ENCODE measurements at regions of chr10 and their contacts with region 1.

Region 1: GRCh38 chr10:73252445-73253224 is at the start of gene MRPS16:
- DNase-seq: peak; percentile 92 to 97 (median 94)
- H3K4me3 ChIP-seq: peak within 1 kb of the TSS; percentile 49 to 99
- H3K4me3 Mint-ChIP-seq: peak within 1 kb of the TSS; percentile 95 to 100 (median 98)
- H3K27ac ChIP-seq: peak within 1 kb of the TSS; percentile 82
- H3K27ac Mint-ChIP-seq: peak within 1 kb of the TSS; percentile 94 to 99 (median 97)
- H3K4me1 ChIP-seq: peaks cover 33% of the 10 kb centered on the region
- H3K4me1 Mint-ChIP-seq: peaks cover 22 to 46% (median 34%) of the 10 kb centered on the region in 4 donors
- H3K27me3 ChIP-seq: no peaks in the 10 kb centered on the region
- H3K27me3 Mint-ChIP-seq: no peaks in the 10 kb centered on the region
- total RNA-seq, gene MRPS16: 44.9 to 47.1 TPM

Region 2: DNA sequence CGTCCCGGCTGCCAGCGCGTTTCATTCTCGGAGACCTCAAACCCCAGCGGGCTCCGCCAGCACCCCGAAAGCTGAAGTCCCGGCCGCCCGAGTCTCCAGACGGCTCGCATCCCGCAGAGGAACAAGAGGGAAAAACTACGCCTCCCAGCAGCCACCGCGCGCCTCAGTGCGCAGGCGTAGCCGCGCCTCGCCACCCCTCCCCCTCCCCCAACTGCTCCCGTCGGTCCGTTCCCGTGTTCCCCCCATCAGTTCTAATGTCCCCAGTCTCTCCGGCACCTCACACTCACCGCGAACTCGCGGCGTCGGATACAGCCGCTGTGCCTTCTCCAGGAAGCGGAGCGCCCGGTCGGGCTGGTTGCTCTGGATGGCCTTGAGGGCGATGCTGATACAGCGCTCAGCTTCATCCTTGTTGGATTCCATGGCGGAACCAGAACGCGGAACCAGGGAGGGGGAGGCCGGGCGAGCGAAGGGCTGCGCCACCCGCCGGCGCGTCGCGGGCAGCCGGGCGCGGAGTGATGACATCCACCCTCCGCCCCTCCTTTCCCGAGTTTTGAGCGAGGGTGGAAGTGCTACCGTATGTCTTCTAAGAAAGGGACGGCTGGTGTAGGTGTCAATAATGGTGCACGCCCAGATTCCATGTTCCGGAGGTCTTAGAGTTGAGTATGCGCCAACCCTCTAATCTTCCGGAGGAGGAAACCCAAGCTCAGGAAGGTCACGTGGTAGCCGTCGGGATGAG is 898.0 kb before region 1 on chr10 and contains the start of gene DNAJB12:
- CTCF ChIA-PET with region 1: no interaction called
- POLR2A ChIA-PET with region 1: no interaction called
- intact Hi-C with region 1: loop called (anchors 10 kb)
- DNase-seq: peak; percentile 92 to 97 (median 94)
- H3K4me3 ChIP-seq: peak within 1 kb of the TSS; percentile 92 to 99
- H3K4me3 Mint-ChIP-seq: peak within 1 kb of the TSS; percentile 94 to 99 (median 97)
- H3K27ac ChIP-seq: peak within 1 kb of the TSS; percentile 80
- H3K27ac Mint-ChIP-seq: peak within 1 kb of the TSS; percentile 90 to 99 (median 98)
- H3K4me1 ChIP-seq: peaks cover 34% of the 10 kb centered on the region
- H3K4me1 Mint-ChIP-seq: peaks cover 30 to 54% (median 42%) of the 10 kb centered on the region in 4 donors
- H3K27me3 ChIP-seq: no peaks in the 10 kb centered on the region
- H3K27me3 Mint-ChIP-seq: no peaks in the 10 kb centered on the region
- total RNA-seq, gene DNAJB12: 26.3 to 26.7 TPM

Region 3: DNA sequence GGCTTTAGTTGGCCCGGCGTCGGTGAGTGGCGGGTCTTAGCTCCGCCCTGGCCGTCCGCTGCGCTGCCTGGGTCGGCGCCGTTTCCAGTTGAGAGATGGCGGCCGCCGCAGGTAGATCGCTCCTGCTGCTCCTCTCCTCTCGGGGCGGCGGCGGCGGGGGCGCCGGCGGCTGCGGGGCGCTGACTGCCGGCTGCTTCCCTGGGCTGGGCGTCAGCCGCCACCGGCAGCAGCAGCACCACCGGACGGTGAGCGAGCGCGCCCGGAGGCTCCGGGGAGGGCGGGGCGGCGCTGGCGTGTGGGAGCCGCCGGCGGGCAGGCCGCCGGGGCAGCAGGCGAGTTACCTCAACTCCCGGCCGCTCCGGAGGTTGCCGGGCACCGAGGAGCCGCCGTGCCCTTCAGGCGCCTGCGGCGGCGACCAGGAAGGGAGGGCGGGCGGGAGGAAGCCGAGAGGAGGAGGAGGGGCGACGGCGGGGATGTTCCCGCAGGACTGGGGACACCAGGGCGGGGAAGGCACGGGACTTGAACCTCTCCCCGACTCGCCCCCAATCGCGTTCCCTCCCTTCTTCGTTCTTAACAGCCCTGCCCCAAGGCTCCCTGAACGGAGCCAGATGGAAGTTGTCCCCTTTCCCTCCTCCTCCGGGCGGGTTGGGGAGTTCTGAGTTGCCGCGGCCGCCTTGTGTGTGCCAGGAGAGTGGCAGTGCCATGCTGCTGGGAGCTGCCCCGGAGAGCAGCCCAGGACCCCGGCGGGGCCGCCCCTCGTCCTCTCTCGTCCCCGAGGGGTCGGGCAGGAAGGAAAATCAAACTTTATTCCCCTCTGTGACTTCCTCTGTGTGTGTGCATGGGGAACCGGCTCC is 560.4 kb before region 1 on chr10 and contains the start of gene MCU:
- CTCF ChIA-PET with region 1: no interaction called
- POLR2A ChIA-PET with region 1: no interaction called
- intact Hi-C with region 1: loop called (anchors 5 kb)
- DNase-seq: peak; percentile 91 to 95 (median 93)
- H3K4me3 ChIP-seq: peak within 1 kb of the TSS; percentile 49 to 69
- H3K4me3 Mint-ChIP-seq: peak within 1 kb of the TSS; percentile 86 to 93 (median 90)
- H3K27ac ChIP-seq: peak within 1 kb of the TSS; percentile 61
- H3K27ac Mint-ChIP-seq: peak within 1 kb of the TSS; percentile 78 to 90 (median 87)
- H3K4me1 ChIP-seq: peaks cover 25% of the 10 kb centered on the region
- H3K4me1 Mint-ChIP-seq: peaks cover 27 to 41% (median 32%) of the 10 kb centered on the region in 4 donors
- H3K27me3 ChIP-seq: no peaks in the 10 kb centered on the region
- H3K27me3 Mint-ChIP-seq: peaks cover 0 to 4% of the 10 kb centered on the region in 2 donors
- total RNA-seq, gene MCU: 12.1 to 16.4 TPM

Region 4: GRCh38 chr10:73238990-73239566 is 13.6 kb before region 1 on chr10:
- CTCF ChIA-PET with region 1: interaction called, 4 read pairs
- POLR2A ChIA-PET with region 1: interaction called, 13 read pairs
- intact Hi-C with region 1: no loop called
- DNase-seq: no peak
- H3K4me3 ChIP-seq: no peak overlapping the region
- H3K4me3 Mint-ChIP-seq: no peak overlapping the region
- H3K27ac ChIP-seq: no peak overlapping the region
- H3K27ac Mint-ChIP-seq: no peak overlapping the region
- H3K4me1 ChIP-seq: peaks cover under 1% of the 10 kb centered on the region
- H3K4me1 Mint-ChIP-seq: peaks cover 2 to 11% (median 5%) of the 10 kb centered on the region in 4 donors
- H3K27me3 ChIP-seq: no peaks in the 10 kb centered on the region
- H3K27me3 Mint-ChIP-seq: no peaks in the 10 kb centered on the region

Region 5: GRCh38 chr10:73358331-73359279 is 106.0 kb after region 1 on chr10 and contains the start of gene CFAP70:
- CTCF ChIA-PET with region 1: no interaction called
- POLR2A ChIA-PET with region 1: interaction called, 15 read pairs
- intact Hi-C with region 1: loop called (anchors 2 kb)
- DNase-seq: peak; percentile 92 to 96 (median 96)
- H3K4me3 ChIP-seq: peak within 1 kb of the TSS; percentile 38 to 60
- H3K4me3 Mint-ChIP-seq: peak within 1 kb of the TSS; percentile 94 to 98 (median 97)
- H3K27ac ChIP-seq: peak within 1 kb of the TSS; percentile 80
- H3K27ac Mint-ChIP-seq: peak within 1 kb of the TSS; percentile 91 to 99 (median 99)
- H3K4me1 ChIP-seq: peaks cover 12% of the 10 kb centered on the region
- H3K4me1 Mint-ChIP-seq: peaks cover 9 to 21% (median 17%) of the 10 kb centered on the region in 4 donors
- H3K27me3 ChIP-seq: no peaks in the 10 kb centered on the region
- H3K27me3 Mint-ChIP-seq: peaks cover 0 to 4% of the 10 kb centered on the region in 2 donors
- total RNA-seq, gene CFAP70: 3.8 to 5.6 TPM

Measured in CD4-positive, alpha-beta memory T cell (primary cell).